Activated CD4-positive, alpha-beta memory T cell treated with anti-CD3 and anti-CD28 coated beads for 36 hours (primary cell): ENCODE measurements at regions of chr15 and their contacts with region 1.

Region 1: GRCh38 chr15:73225358-73226015 is 143.3 kb downstream of the HCN4 start:
- DNase-seq: peak; percentile 79
- H3K4me3 Mint-ChIP-seq: no peak overlapping the region
- H3K27ac Mint-ChIP-seq: no peak overlapping the region
- H3K4me1 Mint-ChIP-seq: peaks cover 26% of the 10 kb centered on the region
- H3K27me3 Mint-ChIP-seq: no peaks in the 10 kb centered on the region

Region 2: GRCh38 chr15:73142802-73143762 is 82.4 kb before region 1 on chr15:
- CTCF ChIA-PET with region 1: no interaction called
- POLR2A ChIA-PET with region 1: no interaction called
- intact Hi-C with region 1: loop called (anchors 5 kb)
- DNase-seq: no peak
- H3K4me3 Mint-ChIP-seq: no peak overlapping the region
- H3K27ac Mint-ChIP-seq: peak overlapping the region; percentile 91
- H3K4me1 Mint-ChIP-seq: peaks cover 45% of the 10 kb centered on the region
- H3K27me3 Mint-ChIP-seq: no peaks in the 10 kb centered on the region

Region 3: DNA sequence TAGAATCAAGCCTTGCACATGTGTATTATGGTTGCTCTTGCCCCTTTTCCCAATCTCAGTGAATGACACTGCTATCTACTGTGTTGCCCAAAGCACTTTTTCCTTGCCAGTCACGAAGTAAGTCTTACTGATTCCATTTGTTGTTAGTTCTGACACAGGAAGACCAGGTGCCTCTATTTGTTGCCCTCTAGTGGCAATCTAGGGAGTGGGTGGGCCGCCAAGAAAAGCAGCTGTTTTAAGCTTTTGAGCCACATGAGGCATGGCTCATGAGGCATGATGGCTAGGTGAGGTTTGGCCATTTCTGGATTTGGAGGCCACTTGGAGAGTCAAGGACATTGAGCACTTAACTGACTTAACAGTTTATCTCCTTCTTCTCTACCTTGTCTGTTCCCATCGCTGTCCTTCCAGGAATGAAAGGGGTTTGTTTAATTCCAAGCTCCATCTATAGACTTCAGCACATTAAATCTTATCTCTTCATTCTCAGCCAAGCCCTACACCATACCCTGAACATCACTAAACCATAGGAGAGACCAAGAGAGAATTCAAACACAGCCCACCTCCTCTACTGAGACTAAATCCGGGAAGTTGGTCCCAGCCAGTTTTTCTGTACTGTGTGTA is 40.2 kb after region 1 on chr15:
- CTCF ChIA-PET with region 1: interaction called, 10 read pairs
- POLR2A ChIA-PET with region 1: no interaction called
- intact Hi-C with region 1: no loop called
- DNase-seq: peak; percentile 72
- H3K4me3 Mint-ChIP-seq: no peak overlapping the region
- H3K27ac Mint-ChIP-seq: no peak overlapping the region
- H3K4me1 Mint-ChIP-seq: peaks cover 4% of the 10 kb centered on the region
- H3K27me3 Mint-ChIP-seq: no peaks in the 10 kb centered on the region